Activated naive CD4-positive, alpha-beta T cell treated with anti-CD3 and anti-CD28 coated beads for 36 hours (primary cell): ENCODE measurements at regions of chr6 and their contacts with region 1.

Region 1: DNA sequence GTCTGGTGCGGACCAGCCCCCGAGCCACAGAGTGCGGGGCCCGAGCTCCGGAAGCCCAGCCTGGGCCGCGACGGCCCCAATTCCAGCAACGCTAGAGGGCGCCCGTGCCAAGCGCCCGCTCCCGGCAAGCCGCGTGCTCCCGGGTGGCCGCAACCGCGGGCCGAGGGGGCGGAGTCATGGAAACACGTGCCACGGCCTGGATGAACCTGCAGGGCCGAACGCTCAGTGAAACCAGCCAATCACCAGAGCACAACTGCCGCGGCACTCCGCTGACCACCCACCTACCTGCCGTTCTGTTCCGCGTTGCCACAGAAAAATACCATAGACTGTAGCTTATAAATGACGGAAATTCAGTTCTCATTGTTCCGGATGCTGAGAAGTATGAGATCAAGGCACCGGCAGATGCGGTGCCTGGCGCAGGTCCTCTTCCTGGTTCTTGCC is 85.7 kb upstream of the FOXC1 start:
- DNase-seq: peak; percentile 78
- H3K4me3 Mint-ChIP-seq: peak overlapping the region; percentile 51
- H3K27ac Mint-ChIP-seq: no peak overlapping the region
- H3K4me1 Mint-ChIP-seq: peaks cover 30% of the 10 kb centered on the region
- H3K27me3 Mint-ChIP-seq: peaks cover 3% of the 10 kb centered on the region

Region 2: DNA sequence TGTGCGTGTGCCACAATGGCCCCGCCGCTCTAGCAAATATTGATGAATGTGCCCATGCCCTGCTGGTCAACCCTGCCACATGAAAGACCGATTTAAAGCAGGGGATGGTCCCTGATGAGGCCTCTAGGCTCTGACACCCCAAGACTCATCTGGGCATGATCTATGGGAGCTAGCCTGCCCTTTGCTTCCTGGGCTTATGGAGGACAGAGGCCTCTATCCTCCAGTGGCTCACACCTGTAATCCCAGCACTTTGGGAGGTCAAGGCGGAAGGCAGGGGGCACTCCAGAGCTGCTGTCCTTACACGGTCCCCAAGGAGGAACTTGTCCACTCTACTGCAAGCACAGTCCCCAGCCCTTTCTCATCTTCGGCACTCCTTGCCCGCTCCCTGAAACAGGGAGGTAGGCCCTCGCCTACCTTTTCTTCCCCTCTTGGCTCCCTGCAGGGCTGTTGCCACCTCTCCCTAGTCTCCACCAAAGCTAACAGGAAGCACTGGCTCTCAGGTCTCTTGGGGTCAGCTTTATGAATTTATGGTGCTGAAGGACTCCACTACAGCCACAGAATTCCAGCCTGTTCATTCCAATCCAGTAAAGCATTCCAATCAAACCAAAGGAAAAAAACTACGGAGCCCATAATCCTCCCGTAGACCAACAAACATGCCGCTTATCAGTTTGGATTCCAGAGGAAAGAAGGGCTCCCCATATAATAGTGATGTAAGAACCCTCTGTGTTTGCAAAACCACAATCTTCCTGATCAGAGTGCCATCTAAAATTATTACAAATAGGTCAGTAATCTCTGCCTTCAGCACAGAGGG is 260.8 kb before region 1 on chr6:
- CTCF ChIA-PET with region 1: no interaction called
- intact Hi-C with region 1: no loop called
- DNase-seq: peak; percentile 8
- H3K4me3 Mint-ChIP-seq: no peak overlapping the region
- H3K27ac Mint-ChIP-seq: no peak overlapping the region
- H3K4me1 Mint-ChIP-seq: no peaks in the 10 kb centered on the region
- H3K27me3 Mint-ChIP-seq: peaks cover 2% of the 10 kb centered on the region

Region 3: DNA sequence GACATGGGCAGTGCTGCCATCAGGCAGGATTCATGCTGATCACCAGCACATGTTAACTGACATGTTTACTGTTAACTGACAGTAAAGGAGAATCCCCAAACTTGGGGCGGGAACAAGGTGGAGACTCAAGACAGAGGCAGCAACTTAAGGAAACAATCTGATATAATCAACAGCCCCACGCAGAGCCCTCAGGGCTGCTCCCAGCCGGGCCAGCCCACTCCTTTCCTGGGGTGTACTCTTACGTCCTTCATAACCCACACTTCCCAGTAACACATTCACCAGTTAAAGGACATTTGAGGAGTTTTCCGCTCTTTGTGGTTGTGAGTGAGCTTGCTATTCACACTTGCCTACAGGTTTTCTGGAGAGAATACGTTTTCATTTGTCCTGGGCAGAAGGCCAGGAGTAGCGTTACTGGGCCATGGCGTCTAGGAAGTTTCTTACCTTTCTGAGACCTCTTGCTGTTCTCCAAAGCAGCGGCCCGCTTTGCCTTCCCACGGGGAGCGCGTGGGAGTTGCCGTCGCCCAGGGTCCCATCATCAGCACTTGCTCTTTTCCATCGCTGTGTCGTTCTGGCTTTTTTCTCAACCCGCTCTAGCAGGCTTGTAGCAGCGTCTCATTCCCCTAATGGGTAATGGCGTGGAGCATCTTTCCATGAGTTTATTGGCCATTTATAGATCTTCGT is 78.3 kb before region 1 on chr6:
- CTCF ChIA-PET with region 1: no interaction called
- intact Hi-C with region 1: no loop called
- DNase-seq: no peak
- H3K4me3 Mint-ChIP-seq: no peak overlapping the region
- H3K27ac Mint-ChIP-seq: no peak overlapping the region
- H3K4me1 Mint-ChIP-seq: no peaks in the 10 kb centered on the region
- H3K27me3 Mint-ChIP-seq: peaks cover 28% of the 10 kb centered on the region

Region 4: GRCh38 chr6:1485678-1486077 is 38.4 kb before region 1 on chr6:
- CTCF ChIA-PET with region 1: no interaction called
- intact Hi-C with region 1: no loop called
- DNase-seq: no peak
- H3K4me3 Mint-ChIP-seq: no peak overlapping the region
- H3K27ac Mint-ChIP-seq: no peak overlapping the region
- H3K4me1 Mint-ChIP-seq: no peaks in the 10 kb centered on the region
- H3K27me3 Mint-ChIP-seq: peaks cover 2% of the 10 kb centered on the region

Region 5: GRCh38 chr6:1540864-1541521 is 16.9 kb after region 1 on chr6:
- CTCF ChIA-PET with region 1: no interaction called
- intact Hi-C with region 1: no loop called
- DNase-seq: no peak
- H3K4me3 Mint-ChIP-seq: no peak overlapping the region
- H3K27ac Mint-ChIP-seq: no peak overlapping the region
- H3K4me1 Mint-ChIP-seq: peaks cover 6% of the 10 kb centered on the region
- H3K27me3 Mint-ChIP-seq: no peaks in the 10 kb centered on the region

Region 6: GRCh38 chr6:1554476-1555310 is 30.6 kb after region 1 on chr6:
- CTCF ChIA-PET with region 1: interaction called, 22 read pairs
- intact Hi-C with region 1: loop called (anchors 1 kb)
- DNase-seq: peak; percentile 71
- H3K4me3 Mint-ChIP-seq: peak overlapping the region; percentile 84
- H3K27ac Mint-ChIP-seq: peak overlapping the region; percentile 81
- H3K4me1 Mint-ChIP-seq: peaks cover 14% of the 10 kb centered on the region
- H3K27me3 Mint-ChIP-seq: peaks cover 16% of the 10 kb centered on the region